Dorsolateral prefrontal cortex (tissue), 120 donors: ENCODE measurements at regions of chr1 and their contacts with region 1.

Region 1: GRCh38 chr1:5297180-5297885 is 642.9 kb downstream of the AJAP1 start:
- DNase-seq: peak in 9 of 10 donors; percentile 73 to 93 (median 89)
- H3K4me3 ChIP-seq: no peak overlapping the region
- H3K27ac ChIP-seq: peak overlapping the region in 55 of 59 donors; percentile 18 to 92 (median 74)
- H3K27me3 ChIP-seq: peaks cover 0 to 27% (median 0%) of the 10 kb centered on the region in 45 donors
- CTCF ChIP-seq: peak in 4 of 56 donors; percentile 7 to 13 (median 10)

Region 2: DNA sequence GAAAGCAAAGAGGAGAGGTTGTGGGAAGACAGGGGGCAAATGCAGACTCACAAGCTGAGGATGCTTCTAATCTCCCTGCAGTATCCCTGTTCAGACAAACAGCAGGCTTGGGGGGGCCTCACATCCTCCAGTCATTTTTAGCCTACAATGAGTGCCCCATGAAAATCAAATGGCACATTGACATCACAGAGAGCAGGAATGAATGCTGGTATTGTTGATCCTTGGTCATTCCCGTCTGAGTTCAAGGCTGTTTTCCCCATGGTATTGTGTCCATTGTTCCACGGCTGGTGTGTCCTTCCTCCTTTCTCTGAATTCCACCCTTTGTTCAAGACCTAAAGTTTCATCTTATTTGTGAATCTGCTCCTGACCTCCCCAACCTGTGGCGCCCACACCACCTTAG is 97.3 kb before region 1 on chr1:
- intact Hi-C with region 1: loop called in 1 of 2 experiments (anchors 5 kb)
- DNase-seq: peak in 2 of 10 donors; percentile 36 to 38
- H3K4me3 ChIP-seq: peak overlapping the region in 1 of 59 donors; percentile 16
- H3K27ac ChIP-seq: peak overlapping the region in 2 of 59 donors; percentile 9 to 48
- H3K27me3 ChIP-seq: peaks cover 0 to 28% (median 0%) of the 10 kb centered on the region in 45 donors
- CTCF ChIP-seq: no peak

Region 3: DNA sequence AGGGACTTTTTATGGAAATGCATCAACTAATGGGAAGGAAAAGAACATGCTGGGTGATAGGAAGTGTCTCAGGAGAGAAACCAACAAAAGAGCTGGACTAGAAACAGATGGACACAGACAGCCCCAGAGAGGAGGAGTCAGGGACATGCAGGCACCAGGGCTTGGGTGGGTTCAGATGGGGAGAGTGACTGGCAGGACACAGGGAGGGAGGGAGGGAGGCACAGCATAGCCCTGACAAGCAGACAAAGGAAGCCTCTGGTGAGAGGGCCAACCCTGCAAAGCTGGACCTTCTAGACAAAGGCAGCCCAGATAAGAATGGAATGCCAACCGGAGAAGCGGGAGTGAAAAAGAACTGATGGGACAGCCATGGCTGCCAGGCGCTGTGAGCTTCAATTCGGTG is 74.1 kb before region 1 on chr1:
- intact Hi-C with region 1: loop called in 1 of 2 experiments (anchors 5 kb)
- DNase-seq: peak in 5 of 10 donors; percentile 55 to 68 (median 58)
- H3K4me3 ChIP-seq: peak overlapping the region in 1 of 59 donors; percentile 13
- H3K27ac ChIP-seq: peak overlapping the region in 29 of 59 donors; percentile 12 to 86 (median 50)
- H3K27me3 ChIP-seq: peaks cover 0 to 9% (median 0%) of the 10 kb centered on the region in 45 donors
- CTCF ChIP-seq: peak in 1 of 56 donors; percentile 9

Region 4: DNA sequence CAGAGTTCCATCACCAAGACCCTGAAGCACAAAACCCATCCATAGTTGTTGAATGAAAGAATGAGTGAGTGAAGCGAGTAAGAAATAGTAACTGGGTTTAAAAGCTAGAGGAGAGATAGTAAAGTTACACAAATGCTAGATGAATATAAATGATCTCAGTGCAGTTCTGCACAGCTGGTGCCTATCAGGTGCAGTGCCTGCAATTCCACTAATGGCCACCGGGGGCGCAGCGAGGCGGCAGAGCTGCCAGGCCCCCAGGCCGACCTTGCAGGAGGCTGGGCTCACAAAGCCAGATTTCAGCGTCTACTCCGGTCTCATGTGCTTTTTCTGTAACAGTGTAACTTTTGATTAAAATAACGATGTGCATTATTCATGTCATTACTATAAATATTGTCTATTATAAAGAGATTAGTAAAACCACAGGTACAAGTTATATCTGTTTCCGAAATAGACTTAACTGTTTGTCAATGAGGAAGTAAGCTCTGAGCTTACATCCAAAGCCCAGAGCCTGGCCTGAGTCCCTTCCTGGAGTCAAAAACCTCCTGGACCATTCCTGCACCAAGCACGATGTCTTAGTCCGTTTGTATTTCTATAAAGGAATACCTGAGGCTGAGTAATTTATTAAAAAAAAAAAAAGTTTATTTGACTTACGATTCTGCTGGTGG is 217.3 kb after region 1 on chr1:
- intact Hi-C with region 1: loop called in 1 of 2 experiments (anchors 10 kb)
- DNase-seq: peak in 9 of 10 donors; percentile 64 to 85 (median 73)
- H3K4me3 ChIP-seq: no peak overlapping the region
- H3K27ac ChIP-seq: no peak overlapping the region
- H3K27me3 ChIP-seq: no peaks in the 10 kb centered on the region
- CTCF ChIP-seq: peak; percentile 97 to 100 (median 99)